CD4-positive, alpha-beta memory T cell (primary cell): ENCODE measurements at regions of chr2 and their contacts with region 1.

Region 1: DNA sequence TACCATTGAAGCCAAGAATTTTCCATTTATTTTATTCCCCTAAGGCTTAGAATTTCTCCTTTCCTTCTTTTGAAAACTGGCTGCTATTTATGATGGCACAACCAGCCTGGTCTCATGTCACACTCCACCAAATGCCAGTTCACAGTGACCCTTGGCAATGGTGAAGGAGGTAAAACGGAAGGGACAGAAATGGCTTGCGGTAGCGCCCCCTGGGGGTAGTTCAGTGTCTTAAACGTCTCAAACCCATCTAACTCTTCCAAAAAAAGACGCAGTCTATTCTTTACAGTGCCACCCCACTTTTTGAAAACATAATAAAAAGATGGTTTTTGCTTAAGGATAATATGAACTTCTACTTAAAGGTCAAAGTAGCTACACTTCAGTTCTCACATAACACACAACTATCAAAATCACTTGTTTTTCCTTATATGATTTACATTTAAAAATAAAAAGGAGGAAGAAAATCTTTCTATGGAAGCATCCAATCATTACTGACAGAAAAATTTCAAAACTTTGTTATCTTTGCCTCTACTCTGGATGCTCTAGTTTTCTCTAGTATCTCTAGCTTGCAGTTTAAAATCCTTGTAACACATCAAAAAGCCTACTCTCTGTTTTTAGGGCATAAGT is 28.0 kb downstream of the PNO1 start:
- DNase-seq: peak; percentile 42 to 59 (median 45)
- H3K4me3 ChIP-seq: no peak overlapping the region
- H3K4me3 Mint-ChIP-seq: no peak overlapping the region
- H3K27ac ChIP-seq: no peak overlapping the region
- H3K27ac Mint-ChIP-seq: peak overlapping the region in 6 of 7 donors; percentile 30 to 89 (median 54)
- H3K4me1 ChIP-seq: peaks cover 16% of the 10 kb centered on the region
- H3K4me1 Mint-ChIP-seq: peaks cover 18 to 35% (median 33%) of the 10 kb centered on the region in 4 donors
- H3K27me3 ChIP-seq: no peaks in the 10 kb centered on the region
- H3K27me3 Mint-ChIP-seq: no peaks in the 10 kb centered on the region

Region 2: DNA sequence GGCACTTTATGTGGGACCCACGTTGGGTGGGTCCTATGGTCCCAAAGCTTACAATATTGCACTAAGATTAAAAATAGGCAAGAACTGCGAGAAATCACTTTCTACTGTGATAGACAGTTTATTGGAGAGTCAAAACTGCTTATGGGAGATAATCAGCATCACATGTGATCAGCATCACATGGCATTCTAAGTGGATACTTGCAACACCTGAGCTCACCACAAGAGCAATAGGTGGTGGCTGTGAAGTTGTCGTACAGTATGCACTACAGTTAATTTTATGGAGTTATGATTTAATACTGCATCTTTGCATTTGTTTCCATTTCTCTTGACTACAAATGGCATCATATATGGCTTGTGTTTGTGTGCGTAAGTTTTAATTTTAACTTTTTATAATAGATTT is 16.4 kb before region 1 on chr2:
- CTCF ChIA-PET with region 1: interaction called, 21 read pairs
- POLR2A ChIA-PET with region 1: no interaction called
- intact Hi-C with region 1: no loop called
- DNase-seq: no peak
- H3K4me3 ChIP-seq: no peak overlapping the region
- H3K4me3 Mint-ChIP-seq: no peak overlapping the region
- H3K27ac ChIP-seq: no peak overlapping the region
- H3K27ac Mint-ChIP-seq: peak overlapping the region in 1 of 7 donors; percentile 36
- H3K4me1 ChIP-seq: no peaks in the 10 kb centered on the region
- H3K4me1 Mint-ChIP-seq: peaks cover 12 to 21% (median 15%) of the 10 kb centered on the region in 4 donors
- H3K27me3 ChIP-seq: no peaks in the 10 kb centered on the region
- H3K27me3 Mint-ChIP-seq: no peaks in the 10 kb centered on the region

Region 3: DNA sequence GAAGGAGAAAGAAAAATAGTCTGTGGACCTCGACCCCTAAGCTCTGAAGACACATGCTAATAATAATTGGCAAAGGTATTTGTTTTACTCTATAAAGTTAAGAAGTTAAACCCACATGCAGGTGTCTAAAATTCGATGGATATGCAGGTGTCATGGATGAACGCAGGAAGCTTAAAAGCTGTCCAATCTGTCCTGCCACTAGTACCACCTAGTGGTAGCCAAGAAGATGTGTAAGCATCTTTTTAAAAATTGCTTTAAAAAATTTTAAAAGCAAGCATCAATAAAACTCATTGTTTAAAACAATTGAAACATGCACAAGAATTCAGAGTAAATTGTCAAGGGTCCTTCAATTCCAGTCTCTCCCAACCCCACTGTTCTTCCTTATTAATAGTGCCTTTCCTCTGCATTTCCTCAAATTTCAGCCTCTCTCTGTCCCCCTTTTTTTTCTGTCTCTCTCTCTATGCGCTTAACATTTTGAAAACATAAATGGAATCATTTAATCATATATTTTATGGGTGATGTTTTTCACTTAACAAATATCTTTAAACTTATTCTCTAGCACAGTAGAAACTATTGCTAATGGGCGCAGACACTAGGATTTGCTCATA is 97.3 kb after region 1 on chr2:
- CTCF ChIA-PET with region 1: interaction called, 17 read pairs
- POLR2A ChIA-PET with region 1: no interaction called
- intact Hi-C with region 1: no loop called
- DNase-seq: peak; percentile 38 to 51 (median 46)
- H3K4me3 ChIP-seq: no peak overlapping the region
- H3K4me3 Mint-ChIP-seq: no peak overlapping the region
- H3K27ac ChIP-seq: no peak overlapping the region
- H3K27ac Mint-ChIP-seq: no peak overlapping the region
- H3K4me1 ChIP-seq: peaks cover 5% of the 10 kb centered on the region
- H3K4me1 Mint-ChIP-seq: peaks cover 0 to 8% (median 0%) of the 10 kb centered on the region in 4 donors
- H3K27me3 ChIP-seq: peaks cover 7% of the 10 kb centered on the region
- H3K27me3 Mint-ChIP-seq: peaks cover 4 to 12% of the 10 kb centered on the region in 2 donors

Region 4: DNA sequence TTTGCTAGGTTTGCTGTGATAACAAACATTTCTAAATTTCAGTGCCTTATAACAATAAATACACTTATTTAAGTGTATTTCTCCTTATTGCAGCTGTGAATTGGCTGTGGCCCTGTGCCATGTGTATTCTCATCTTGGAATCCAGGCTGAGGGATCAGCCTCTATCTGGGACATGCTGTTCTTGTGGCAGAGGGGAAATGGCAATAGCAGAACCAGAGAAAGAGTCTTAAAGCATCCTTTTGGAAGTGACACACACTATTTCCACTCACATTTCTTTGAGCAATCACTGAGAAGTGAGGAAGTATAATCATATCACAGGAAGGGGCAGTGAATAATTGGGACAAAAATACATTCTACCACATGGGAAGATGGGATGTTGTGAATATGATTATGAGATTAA is 391.5 kb after region 1 on chr2:
- CTCF ChIA-PET with region 1: no interaction called
- POLR2A ChIA-PET with region 1: no interaction called
- intact Hi-C with region 1: no loop called
- DNase-seq: no peak
- H3K4me3 ChIP-seq: no peak overlapping the region
- H3K4me3 Mint-ChIP-seq: no peak overlapping the region
- H3K27ac ChIP-seq: no peak overlapping the region
- H3K27ac Mint-ChIP-seq: peak overlapping the region in 1 of 7 donors; percentile 1
- H3K4me1 ChIP-seq: no peaks in the 10 kb centered on the region
- H3K4me1 Mint-ChIP-seq: no peaks in the 10 kb centered on the region
- H3K27me3 ChIP-seq: no peaks in the 10 kb centered on the region
- H3K27me3 Mint-ChIP-seq: no peaks in the 10 kb centered on the region